Mammary epithelial cell (primary cell): ENCODE measurements at regions of chr15 and their contacts with region 1.

Region 1: DNA sequence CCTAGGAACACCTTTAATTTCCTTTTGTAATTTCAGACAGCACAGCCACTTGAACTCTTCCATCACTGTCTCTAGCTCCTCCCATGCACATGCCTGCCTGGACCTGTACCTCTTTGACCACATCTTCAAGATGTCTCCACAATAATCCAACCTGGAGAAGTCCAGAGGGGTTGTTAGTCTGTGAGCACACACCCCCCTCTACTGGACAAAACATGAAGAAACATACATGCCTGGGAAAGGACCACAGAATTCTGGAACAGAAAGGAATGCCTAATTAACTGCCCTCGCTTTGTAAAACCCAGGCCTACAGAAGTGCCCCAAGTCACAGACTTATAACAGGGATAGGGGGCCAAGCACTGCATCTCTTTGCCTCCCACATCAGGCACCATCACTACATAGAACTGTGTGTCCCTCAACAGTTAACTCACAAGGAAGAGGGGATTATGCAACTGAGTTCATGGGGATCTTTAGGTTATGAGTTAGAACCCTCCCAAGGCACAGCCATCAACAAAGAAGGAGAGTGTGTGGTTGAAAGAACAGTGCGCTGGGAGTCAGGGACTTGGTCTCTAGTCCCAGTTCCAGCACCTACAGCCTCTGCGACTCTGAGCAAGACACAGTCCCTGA is 61.7 kb downstream of the FMN1 start:
- DNase-seq: peak; percentile 92
- H3K4me3 ChIP-seq: no peak overlapping the region
- H3K27ac ChIP-seq: peak overlapping the region; percentile 7
- H3K4me1 ChIP-seq: peaks cover 23% of the 10 kb centered on the region
- H3K27me3 ChIP-seq: no peaks in the 10 kb centered on the region
- CTCF ChIP-seq: peak; percentile 81 to 82

Region 2: DNA sequence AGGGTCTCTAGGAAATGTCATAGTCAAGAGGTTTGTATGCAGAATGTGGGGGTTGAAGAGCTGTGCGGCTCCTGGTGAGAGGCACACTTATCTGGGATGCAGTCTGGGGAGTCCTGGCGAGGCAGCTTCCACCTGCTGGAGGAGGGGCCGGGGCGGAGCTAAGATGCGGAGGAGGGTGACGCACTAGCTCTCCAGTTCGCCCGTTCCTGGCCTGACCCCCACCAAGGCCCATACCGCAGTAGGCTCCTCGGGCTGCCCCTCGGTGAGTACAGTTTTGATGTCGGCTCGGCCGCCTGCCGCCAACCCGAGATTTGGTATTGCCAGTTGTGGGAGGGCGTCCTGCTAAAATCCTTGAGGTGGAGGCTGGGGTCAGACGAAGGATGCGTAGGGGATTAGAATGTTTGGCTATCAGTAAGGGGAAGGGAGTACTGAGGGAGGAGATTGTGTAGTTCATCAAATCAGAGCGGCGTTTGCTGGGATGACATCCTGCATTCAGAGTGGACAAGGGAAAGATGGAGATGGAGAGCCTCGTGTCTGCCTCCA is 491.2 kb before region 1 on chr15 and contains the start of gene SCG5:
- CTCF ChIA-PET with region 1: interaction called, 3 read pairs
- dilution Hi-C with region 1: no loop called
- in situ Hi-C with region 1: loop called in 1 of 2 experiments (anchors 10 kb)
- intact Hi-C with region 1: no loop called
- DNase-seq: no peak
- H3K4me3 ChIP-seq: peak within 1 kb of the TSS in 1 of 3 experiments; percentile 31
- H3K27ac ChIP-seq: no peak within 1 kb of the TSS
- H3K4me1 ChIP-seq: peaks cover 24% of the 10 kb centered on the region
- H3K27me3 ChIP-seq: no peaks in the 10 kb centered on the region
- CTCF ChIP-seq: no peak
- total RNA-seq, gene SCG5: 1.8 to 39.8 TPM

Region 3: DNA sequence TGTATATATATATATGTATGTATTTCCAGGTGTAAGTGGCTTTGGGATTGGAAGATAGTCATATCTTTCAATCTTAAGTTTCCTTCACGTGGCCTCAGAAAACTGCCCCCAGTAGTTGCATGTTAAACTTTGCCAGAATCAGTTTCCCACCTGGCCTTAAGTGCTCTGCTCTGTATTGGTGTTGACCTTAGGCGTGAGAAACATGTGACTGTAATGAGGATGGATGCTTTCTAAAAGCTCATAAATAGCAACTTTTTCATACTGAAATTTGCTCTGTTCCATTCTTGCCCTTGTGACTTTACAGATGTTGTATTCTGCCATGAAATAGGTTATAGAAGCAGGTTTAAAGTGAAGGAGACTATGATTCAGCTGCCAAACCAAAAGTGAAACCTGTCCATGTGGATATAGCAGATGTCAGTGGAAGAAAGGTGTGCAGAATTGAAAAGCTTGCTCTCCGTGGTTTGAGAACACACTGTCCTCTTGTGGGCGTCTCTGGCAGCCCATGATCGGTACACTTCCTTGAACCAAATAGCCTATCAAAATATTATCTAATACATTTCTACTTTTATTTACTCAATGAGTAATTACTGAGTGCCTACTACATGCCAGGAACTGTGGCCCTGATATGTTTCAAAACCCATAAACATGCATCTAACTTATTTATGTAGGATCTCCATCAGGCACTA is 475.5 kb before region 1 on chr15:
- CTCF ChIA-PET with region 1: no interaction called
- dilution Hi-C with region 1: no loop called
- in situ Hi-C with region 1: loop called in 1 of 2 experiments (anchors 25 kb)
- intact Hi-C with region 1: loop called (anchors 1 kb)
- DNase-seq: peak; percentile 69
- H3K4me3 ChIP-seq: no peak overlapping the region
- H3K27ac ChIP-seq: no peak overlapping the region
- H3K4me1 ChIP-seq: peaks cover 49% of the 10 kb centered on the region
- H3K27me3 ChIP-seq: no peaks in the 10 kb centered on the region
- CTCF ChIP-seq: peak; percentile 19 to 56

Region 4: GRCh38 chr15:32844118-32844711 is 288.6 kb before region 1 on chr15:
- CTCF ChIA-PET with region 1: no interaction called
- dilution Hi-C with region 1: no loop called
- in situ Hi-C with region 1: loop called in 1 of 2 experiments (anchors 25 kb)
- intact Hi-C with region 1: loop called (anchors 1 kb)
- DNase-seq: peak; percentile 14
- H3K4me3 ChIP-seq: no peak overlapping the region
- H3K27ac ChIP-seq: no peak overlapping the region
- H3K4me1 ChIP-seq: no peaks in the 10 kb centered on the region
- H3K27me3 ChIP-seq: no peaks in the 10 kb centered on the region
- CTCF ChIP-seq: peak; percentile 63 to 76

Region 5: DNA sequence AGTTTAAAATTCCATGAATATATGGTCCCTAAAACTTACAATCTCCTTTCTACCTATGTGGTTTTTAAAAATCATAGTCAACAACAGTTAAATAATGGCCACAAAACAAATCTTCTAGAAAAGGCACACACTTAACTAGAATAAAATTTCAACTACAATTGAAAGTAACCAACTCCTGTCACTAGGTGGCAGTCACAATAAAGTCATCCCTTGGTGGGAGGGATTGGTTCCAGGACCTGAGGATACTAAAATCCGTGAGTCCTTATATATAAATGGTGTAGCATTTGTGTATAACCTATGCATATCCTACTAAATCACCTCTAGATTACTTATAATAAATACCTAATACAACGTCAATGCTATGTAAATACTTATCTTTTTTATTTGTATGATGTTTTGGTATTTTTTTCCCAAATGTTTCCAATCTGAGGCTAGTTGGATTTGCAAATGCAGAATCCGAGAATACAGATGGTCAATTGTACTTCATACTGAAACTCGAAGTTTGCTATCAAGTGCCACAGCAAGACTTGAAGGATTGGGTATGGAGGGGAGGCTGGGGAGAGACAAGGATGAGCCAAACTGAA is 110.9 kb before region 1 on chr15:
- CTCF ChIA-PET with region 1: interaction called, 18 read pairs
- dilution Hi-C with region 1: no loop called
- in situ Hi-C with region 1: loop called (anchors 5 to 10 kb)
- intact Hi-C with region 1: loop called (anchors 1 kb)
- DNase-seq: peak; percentile 53
- H3K4me3 ChIP-seq: no peak overlapping the region
- H3K27ac ChIP-seq: peak overlapping the region; percentile 67
- H3K4me1 ChIP-seq: peaks cover 15% of the 10 kb centered on the region
- H3K27me3 ChIP-seq: no peaks in the 10 kb centered on the region
- CTCF ChIP-seq: peak; percentile 62 to 65

Region 6: DNA sequence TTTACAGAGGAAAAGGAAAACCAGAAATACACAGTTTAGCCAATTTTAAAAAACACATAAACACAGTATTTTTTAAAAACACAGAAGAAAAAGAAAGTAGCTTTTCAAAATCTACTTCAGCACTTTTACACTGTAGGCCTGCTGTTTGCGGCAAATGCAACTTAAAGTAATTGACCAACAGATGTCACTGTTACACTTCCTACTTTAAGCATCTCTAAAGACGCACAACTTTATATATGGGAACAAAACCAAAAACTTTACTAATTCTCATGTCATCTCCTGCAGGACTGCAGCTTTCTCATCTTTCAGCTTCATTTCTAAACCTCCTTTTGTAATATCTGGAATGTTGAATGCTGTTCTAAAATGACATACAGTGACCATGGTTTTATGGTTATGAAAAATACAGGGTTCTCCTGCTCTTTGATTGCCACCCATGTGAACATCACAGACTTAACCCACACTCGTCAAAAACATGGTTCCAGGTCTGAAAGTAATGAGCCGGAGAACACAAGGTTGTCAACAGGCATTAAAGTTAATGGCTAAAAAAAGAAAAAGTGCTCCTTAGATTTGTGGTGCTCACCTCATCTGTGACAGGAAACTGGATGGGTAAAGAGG is 46.2 kb before region 1 on chr15:
- CTCF ChIA-PET with region 1: interaction called, 13 read pairs
- dilution Hi-C with region 1: no loop called
- in situ Hi-C with region 1: loop called (anchors 5 to 10 kb)
- intact Hi-C with region 1: loop called (anchors 1 kb)
- DNase-seq: peak; percentile 58
- H3K4me3 ChIP-seq: no peak overlapping the region
- H3K27ac ChIP-seq: no peak overlapping the region
- H3K4me1 ChIP-seq: peaks cover 33% of the 10 kb centered on the region
- H3K27me3 ChIP-seq: no peaks in the 10 kb centered on the region
- CTCF ChIP-seq: peak; percentile 62 to 71

Region 7: DNA sequence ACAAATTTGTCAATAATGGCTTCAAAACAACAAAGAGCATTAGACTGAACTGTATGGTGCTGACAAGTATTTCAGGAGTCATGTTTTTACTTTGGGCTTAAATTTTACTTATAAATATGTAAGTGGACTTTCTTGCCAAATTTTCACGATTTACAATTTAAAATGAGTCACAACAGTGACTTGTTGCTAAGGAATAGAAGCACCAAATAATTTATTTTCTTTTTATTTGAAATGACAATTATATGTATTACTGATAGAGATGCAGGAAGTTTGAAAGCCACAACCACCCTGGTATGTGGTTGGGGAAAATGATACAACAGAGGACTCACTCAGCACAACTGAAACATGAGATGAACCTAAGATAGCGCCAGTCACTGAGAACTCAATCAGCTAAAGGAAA is 28.6 kb before region 1 on chr15:
- CTCF ChIA-PET with region 1: no interaction called
- dilution Hi-C with region 1: no loop called
- in situ Hi-C with region 1: no loop called
- intact Hi-C with region 1: no loop called
- DNase-seq: peak; percentile 81
- H3K4me3 ChIP-seq: no peak overlapping the region
- H3K27ac ChIP-seq: no peak overlapping the region
- H3K4me1 ChIP-seq: peaks cover 6% of the 10 kb centered on the region
- H3K27me3 ChIP-seq: no peaks in the 10 kb centered on the region
- CTCF ChIP-seq: no peak

Region 8: DNA sequence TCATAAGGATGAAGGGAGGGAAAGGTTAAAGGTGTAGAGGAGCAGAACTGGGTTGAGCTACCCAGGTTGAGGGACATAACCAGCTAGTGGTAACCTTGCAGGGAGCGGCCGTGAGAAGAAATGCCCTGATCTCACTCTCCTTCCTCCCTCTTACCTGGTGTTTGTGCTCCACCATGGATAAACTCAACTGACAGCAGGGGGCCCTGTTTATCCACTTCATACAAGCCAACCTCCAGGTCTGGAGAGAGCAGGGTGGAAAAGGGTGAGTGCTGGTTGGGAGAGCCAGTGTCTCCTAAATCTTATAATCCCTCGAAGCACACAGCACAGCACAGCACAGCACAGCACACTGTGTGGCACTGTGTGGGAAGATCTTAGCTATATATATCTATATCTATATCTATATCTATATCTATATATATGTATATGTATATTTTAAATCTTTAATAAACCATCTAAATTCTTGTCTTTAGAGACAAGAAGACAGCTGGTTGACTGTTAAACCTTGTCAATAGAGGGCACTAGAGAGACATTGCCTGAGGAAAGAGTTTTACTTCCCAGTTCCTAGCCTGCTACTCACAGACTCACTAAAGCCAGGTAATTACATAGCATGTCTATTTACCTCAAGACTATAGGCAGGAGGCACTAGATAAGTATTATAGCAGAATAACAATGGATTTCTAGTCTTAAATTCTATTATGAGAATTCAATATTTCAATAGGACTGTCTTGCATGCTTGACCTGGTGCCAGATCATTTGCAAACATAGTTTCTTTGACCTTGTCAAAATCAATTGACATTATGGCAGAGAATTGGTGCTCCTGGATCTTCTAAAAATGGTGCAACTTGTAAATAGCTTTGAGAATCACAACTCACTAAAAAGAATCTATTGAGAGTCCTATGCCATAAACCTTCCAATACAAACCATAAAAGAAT is 83.4 kb after region 1 on chr15:
- CTCF ChIA-PET with region 1: no interaction called
- dilution Hi-C with region 1: no loop called
- in situ Hi-C with region 1: no loop called
- intact Hi-C with region 1: loop called (anchors 5 kb)
- DNase-seq: peak; percentile 51
- H3K4me3 ChIP-seq: no peak overlapping the region
- H3K27ac ChIP-seq: no peak overlapping the region
- H3K4me1 ChIP-seq: no peaks in the 10 kb centered on the region
- H3K27me3 ChIP-seq: no peaks in the 10 kb centered on the region
- CTCF ChIP-seq: peak; percentile 63 to 73

Region 9: GRCh38 chr15:33411596-33412540 is 279.0 kb after region 1 on chr15:
- CTCF ChIA-PET with region 1: no interaction called
- dilution Hi-C with region 1: no loop called
- in situ Hi-C with region 1: no loop called
- intact Hi-C with region 1: no loop called
- DNase-seq: no peak
- H3K4me3 ChIP-seq: no peak overlapping the region
- H3K27ac ChIP-seq: no peak overlapping the region
- H3K4me1 ChIP-seq: peaks cover 4% of the 10 kb centered on the region
- H3K27me3 ChIP-seq: no peaks in the 10 kb centered on the region
- CTCF ChIP-seq: no peak